ENCODE measurements at regions of chr17 and their contacts with region 1.

Region 1: GRCh38 chr17:20244671-20245070 is 222.7 kb downstream of the LGALS9B start:
- DNase-seq: no peak
- H3K4me3 ChIP-seq: no peak overlapping the region
- H3K27ac ChIP-seq: no peak overlapping the region
- H3K4me1 ChIP-seq: peaks cover 0 to 4% of the 10 kb centered on the region in 2 donors
- H3K27me3 ChIP-seq: no peaks in the 10 kb centered on the region
- CTCF ChIP-seq: no peak
- POLR2A ChIP-seq: no peak

Region 2: DNA sequence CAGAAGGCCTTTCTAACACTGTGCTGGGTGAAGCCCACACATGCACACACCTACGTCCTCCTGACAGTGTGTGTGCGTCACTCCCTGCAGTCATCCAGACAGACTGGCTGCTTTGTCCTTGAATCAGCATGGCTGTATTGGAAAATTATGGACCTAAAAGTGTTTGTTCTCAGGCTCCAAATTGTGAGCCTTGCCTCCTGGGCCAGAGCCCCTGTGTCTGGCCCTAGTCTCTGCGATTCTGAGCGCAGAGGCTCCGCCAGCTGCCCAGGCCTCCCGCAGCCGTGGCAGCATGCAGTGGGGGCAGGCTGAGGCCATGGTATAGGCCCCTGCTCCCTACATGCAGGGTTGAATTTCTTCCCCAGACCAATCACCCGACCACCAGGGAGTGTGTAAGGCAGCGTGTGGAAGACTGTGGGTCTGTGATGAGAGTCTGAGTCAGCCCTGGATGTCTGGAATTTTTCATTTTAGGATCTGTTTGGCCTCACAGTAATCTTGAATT is 55.8 kb after region 1 on chr17:
- intact Hi-C with region 1: loop called in 1 of 2 experiments (anchors 5 kb)
- DNase-seq: peak in 3 of 7 donors; percentile 18 to 48 (median 37)
- H3K4me3 ChIP-seq: no peak overlapping the region
- H3K27ac ChIP-seq: no peak overlapping the region
- H3K4me1 ChIP-seq: no peaks in the 10 kb centered on the region
- H3K27me3 ChIP-seq: no peaks in the 10 kb centered on the region
- CTCF ChIP-seq: no peak
- POLR2A ChIP-seq: no peak

Measured in adrenal gland (tissue), 19 donors.